ENCODE measurements at regions of chr14 and their contacts with region 1.

Region 1: GRCh38 chr14:26820138-26820537 is 222.3 kb upstream of the NOVA1 start:
- DNase-seq: no peak
- ATAC-seq: no peak
- H3K4me3 Mint-ChIP-seq: no peak overlapping the region
- H3K27ac Mint-ChIP-seq: no peak overlapping the region
- H3K4me1 Mint-ChIP-seq: no peaks in the 10 kb centered on the region
- H3K27me3 Mint-ChIP-seq: no peaks in the 10 kb centered on the region
- CTCF ChIP-seq: no peak

Region 2: DNA sequence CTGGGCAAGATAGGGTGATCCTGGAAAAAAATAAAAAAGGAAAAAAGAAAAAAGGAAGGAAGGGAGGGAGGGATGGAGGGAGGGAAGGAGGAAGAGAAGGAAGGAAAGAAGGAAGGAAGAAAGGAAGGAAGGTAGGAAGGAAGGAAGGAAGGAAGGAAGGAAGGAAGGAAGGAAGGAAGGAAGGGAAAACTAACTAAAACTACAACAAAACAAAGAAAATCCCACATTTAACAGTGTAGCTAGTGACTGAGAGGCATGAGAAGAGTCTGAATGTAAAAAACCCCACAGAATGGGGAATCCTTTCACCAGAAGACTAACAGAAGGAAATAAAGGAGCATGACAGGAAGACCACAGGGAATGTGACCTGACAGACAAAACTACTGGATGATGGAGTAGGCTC is 568.0 kb before region 1 on chr14:
- CTCF ChIA-PET with region 1: no interaction called
- POLR2A ChIA-PET with region 1: interaction called, 14 read pairs
- intact Hi-C with region 1: no loop called
- DNase-seq: no peak
- ATAC-seq: no peak
- H3K4me3 Mint-ChIP-seq: no peak overlapping the region
- H3K27ac Mint-ChIP-seq: no peak overlapping the region
- H3K4me1 Mint-ChIP-seq: no peaks in the 10 kb centered on the region
- H3K27me3 Mint-ChIP-seq: no peaks in the 10 kb centered on the region
- CTCF ChIP-seq: no peak

Region 3: DNA sequence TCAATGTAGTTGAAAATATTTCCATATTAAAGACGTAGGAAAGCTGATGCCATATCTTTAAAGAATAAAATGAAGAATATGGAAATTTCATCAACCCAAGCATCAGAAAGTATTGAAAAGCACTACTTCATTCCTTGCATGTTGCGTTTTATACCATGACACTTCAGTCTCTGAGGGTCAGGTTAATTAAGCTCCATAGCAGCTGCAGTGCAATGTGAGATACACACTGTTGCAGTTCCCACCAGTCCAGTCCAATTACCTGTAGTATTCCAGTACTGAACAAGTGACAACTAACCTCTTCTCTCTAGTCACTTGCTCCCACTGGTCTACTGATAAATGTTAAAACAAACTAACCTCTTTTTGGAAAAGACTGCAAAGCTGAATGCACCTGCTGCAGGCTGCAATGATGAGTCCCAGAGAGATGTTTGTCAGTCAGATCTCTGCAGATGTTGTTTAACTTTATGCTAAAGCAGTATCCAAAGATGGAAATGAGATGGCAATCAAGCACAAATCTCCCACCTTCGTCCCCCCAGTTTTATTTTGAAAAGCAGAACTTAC is 230.2 kb before region 1 on chr14:
- CTCF ChIA-PET with region 1: no interaction called
- POLR2A ChIA-PET with region 1: no interaction called
- intact Hi-C with region 1: no loop called
- DNase-seq: no peak
- ATAC-seq: no peak
- H3K4me3 Mint-ChIP-seq: no peak overlapping the region
- H3K27ac Mint-ChIP-seq: no peak overlapping the region
- H3K4me1 Mint-ChIP-seq: no peaks in the 10 kb centered on the region
- H3K27me3 Mint-ChIP-seq: no peaks in the 10 kb centered on the region
- CTCF ChIP-seq: no peak

Measured in activated B cell treated with CpG ODN at 0.5 μM for 24 hours (primary cell).